CD4-positive, alpha-beta T cell (primary cell): ENCODE measurements at regions of chr11 and their contacts with region 1.

Region 1: DNA sequence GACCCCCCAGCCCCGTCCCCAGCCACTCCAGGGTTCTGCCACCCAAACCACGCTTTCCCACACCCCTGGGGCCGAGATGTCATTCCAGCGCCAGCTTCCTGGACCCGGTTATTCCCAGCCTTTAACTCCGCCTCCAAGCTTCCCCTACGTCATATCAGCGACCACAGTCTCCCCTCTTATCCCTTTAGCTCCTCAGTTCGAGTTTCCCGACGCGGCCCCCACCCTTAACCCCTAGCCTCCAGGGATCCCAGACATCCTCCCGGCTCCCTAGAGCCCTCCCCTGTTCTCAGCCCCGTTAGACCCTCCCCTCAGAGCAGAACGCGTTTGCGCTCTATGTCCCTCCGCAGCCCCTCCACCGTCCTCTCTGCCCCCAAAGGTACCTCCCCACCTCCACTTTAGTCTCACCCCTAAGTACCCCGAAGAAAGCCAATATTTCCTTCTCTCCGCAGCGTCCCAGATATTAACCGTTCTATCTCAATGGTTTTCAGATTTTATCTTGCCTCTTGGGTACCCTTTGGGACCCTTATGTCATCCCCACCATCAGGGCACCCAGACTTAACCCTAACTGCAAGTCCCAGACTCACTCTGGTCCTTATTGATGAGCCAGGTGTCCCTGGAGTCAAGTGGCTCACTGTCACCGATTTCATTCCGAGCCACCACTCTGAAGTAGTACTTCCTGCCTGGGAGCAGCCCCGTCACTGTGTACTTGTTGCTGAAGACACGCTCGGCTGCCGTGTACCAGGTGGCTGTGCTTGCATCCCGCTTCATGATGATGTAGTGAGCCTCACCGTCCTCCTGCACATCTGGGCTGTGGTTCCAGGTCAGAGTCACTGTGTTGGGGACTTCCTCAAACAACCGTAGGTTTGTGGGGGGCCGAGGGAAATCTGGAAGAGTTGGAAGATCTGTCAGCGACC is 8.0 kb downstream of the TMEM86A start:
- DNase-seq: peak; percentile 37 to 84 (median 49)
- ATAC-seq: peak; percentile 90
- H3K4me3 ChIP-seq: peak overlapping the region; percentile 61
- H3K4me3 Mint-ChIP-seq: peak overlapping the region; percentile 95
- H3K27ac ChIP-seq: peak overlapping the region; percentile 23 to 50
- H3K27ac Mint-ChIP-seq: peak overlapping the region; percentile 82
- H3K4me1 ChIP-seq: peaks cover 26% of the 10 kb centered on the region
- H3K4me1 Mint-ChIP-seq: peaks cover 21% of the 10 kb centered on the region
- H3K27me3 ChIP-seq: peaks cover 0 to 3% of the 10 kb centered on the region in 2 experiments
- H3K27me3 Mint-ChIP-seq: no peaks in the 10 kb centered on the region
- CTCF ChIP-seq: no peak

Region 2: GRCh38 chr11:18383388-18384156 is 323.0 kb before region 1 on chr11:
- CTCF ChIA-PET with region 1: no interaction called
- POLR2A ChIA-PET with region 1: no interaction called
- intact Hi-C with region 1: loop called in 1 of 2 experiments (anchors 10 kb)
- DNase-seq: peak; percentile 26 to 87 (median 56)
- ATAC-seq: peak; percentile 74
- H3K4me3 ChIP-seq: peak overlapping the region; percentile 35
- H3K4me3 Mint-ChIP-seq: peak overlapping the region; percentile 73
- H3K27ac ChIP-seq: peak overlapping the region; percentile 86 to 92
- H3K27ac Mint-ChIP-seq: peak overlapping the region; percentile 96
- H3K4me1 ChIP-seq: peaks cover 53% of the 10 kb centered on the region
- H3K4me1 Mint-ChIP-seq: peaks cover 44% of the 10 kb centered on the region
- H3K27me3 ChIP-seq: no peaks in the 10 kb centered on the region
- H3K27me3 Mint-ChIP-seq: no peaks in the 10 kb centered on the region
- CTCF ChIP-seq: no peak

Region 3: DNA sequence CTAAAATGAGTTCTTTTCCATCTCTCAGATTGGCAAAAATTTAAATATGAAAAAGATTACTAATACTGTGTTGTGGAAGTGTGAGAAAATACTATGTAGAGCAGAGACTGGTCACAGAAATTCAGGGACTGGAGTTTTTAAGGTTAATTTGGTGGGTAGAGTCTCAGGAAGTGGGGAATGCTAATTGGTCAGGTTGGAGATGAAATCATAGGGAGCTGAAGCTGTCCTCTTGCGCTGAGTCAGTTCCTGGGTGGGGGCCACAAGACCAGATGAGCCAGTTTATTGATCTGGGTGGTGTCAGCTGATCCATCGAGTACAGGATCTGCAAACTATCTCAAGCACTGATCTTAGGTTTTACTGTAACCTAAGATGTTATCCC is 37.4 kb before region 1 on chr11:
- CTCF ChIA-PET with region 1: no interaction called
- POLR2A ChIA-PET with region 1: interaction called, 4 read pairs
- intact Hi-C with region 1: loop called in 1 of 2 experiments (anchors 5 kb)
- DNase-seq: peak in 4 of 14 experiments; percentile 10 to 43 (median 28)
- ATAC-seq: no peak
- H3K4me3 ChIP-seq: no peak overlapping the region
- H3K4me3 Mint-ChIP-seq: no peak overlapping the region
- H3K27ac ChIP-seq: no peak overlapping the region
- H3K27ac Mint-ChIP-seq: peak overlapping the region; percentile 40
- H3K4me1 ChIP-seq: peaks cover 32% of the 10 kb centered on the region
- H3K4me1 Mint-ChIP-seq: peaks cover 57% of the 10 kb centered on the region
- H3K27me3 ChIP-seq: no peaks in the 10 kb centered on the region
- H3K27me3 Mint-ChIP-seq: no peaks in the 10 kb centered on the region
- CTCF ChIP-seq: no peak

Region 4: GRCh38 chr11:18749697-18750319 is 43.2 kb after region 1 on chr11:
- CTCF ChIA-PET with region 1: no interaction called
- POLR2A ChIA-PET with region 1: no interaction called
- intact Hi-C with region 1: no loop called
- DNase-seq: no peak
- ATAC-seq: no peak
- H3K4me3 ChIP-seq: no peak overlapping the region
- H3K4me3 Mint-ChIP-seq: no peak overlapping the region
- H3K27ac ChIP-seq: no peak overlapping the region
- H3K27ac Mint-ChIP-seq: no peak overlapping the region
- H3K4me1 ChIP-seq: no peaks in the 10 kb centered on the region
- H3K4me1 Mint-ChIP-seq: no peaks in the 10 kb centered on the region
- H3K27me3 ChIP-seq: peaks cover 4% of the 10 kb centered on the region in 2 experiments
- H3K27me3 Mint-ChIP-seq: no peaks in the 10 kb centered on the region
- CTCF ChIP-seq: no peak